IMR-90 (cell line): ENCODE measurements at regions of chr4 and their contacts with region 1.

Region 1: DNA sequence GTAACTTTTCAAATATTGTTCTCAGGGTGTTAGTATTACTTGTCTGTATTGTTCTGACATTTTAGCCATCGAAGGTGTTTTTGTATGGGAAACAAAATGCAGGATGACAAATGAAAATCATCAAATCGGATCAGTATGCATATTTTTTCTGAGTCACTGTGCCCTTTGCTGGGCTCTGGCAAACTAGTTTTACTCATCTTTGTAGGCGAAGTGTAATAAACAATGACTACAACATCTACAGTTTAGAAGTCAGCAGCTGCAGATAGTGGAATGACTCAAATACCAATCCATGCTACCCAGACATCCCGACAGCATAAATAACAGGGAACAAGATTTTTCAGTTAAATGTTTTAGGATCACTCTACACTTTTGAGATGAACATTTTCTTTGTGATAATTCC is 557.3 kb upstream of the TENM3 start:
- DNase-seq: peak; percentile 97
- ATAC-seq: peak; percentile 85
- H3K4me3 ChIP-seq: peak overlapping the region; percentile 8; the same call in 1 of the 2 replicates
- H3K27ac ChIP-seq: no peak overlapping the region
- H3K4me1 ChIP-seq: peaks cover 11% of the 10 kb centered on the region
- H3K27me3 ChIP-seq: no peaks in the 10 kb centered on the region
- CTCF ChIP-seq: no peak
- POLR2A ChIP-seq: peak; percentile 33; the same call in 1 of the 2 replicates
- RAD21 ChIP-seq: no peak

Region 2: DNA sequence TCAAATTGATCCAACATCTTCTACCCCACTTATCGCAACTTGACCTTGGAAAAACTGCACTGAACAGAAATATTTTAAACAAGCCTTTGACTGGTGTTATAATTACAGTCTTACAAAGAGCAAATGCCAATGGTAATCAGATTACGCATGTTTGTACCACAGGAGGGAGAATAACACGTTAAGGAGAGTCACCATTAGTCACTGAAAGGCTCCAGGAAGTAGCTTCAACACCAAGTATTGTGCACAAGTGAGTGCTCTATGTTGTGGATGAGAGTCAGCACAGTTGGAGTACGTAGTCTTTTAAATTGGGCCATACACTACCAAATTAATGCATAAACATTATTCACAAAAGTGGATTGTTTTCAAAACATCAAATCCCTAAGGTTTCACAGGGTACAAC is 524.2 kb before region 1 on chr4:
- CTCF ChIA-PET with region 1: no interaction called
- POLR2A ChIA-PET with region 1: no interaction called
- dilution Hi-C with region 1: no loop called
- in situ Hi-C with region 1: no loop called
- intact Hi-C with region 1: no loop called
- DNase-seq: no peak
- ATAC-seq: no peak
- H3K4me3 ChIP-seq: no peak overlapping the region
- H3K27ac ChIP-seq: no peak overlapping the region
- H3K4me1 ChIP-seq: no peaks in the 10 kb centered on the region
- H3K27me3 ChIP-seq: no peaks in the 10 kb centered on the region
- CTCF ChIP-seq: no peak
- POLR2A ChIP-seq: no peak
- RAD21 ChIP-seq: no peak

Region 3: DNA sequence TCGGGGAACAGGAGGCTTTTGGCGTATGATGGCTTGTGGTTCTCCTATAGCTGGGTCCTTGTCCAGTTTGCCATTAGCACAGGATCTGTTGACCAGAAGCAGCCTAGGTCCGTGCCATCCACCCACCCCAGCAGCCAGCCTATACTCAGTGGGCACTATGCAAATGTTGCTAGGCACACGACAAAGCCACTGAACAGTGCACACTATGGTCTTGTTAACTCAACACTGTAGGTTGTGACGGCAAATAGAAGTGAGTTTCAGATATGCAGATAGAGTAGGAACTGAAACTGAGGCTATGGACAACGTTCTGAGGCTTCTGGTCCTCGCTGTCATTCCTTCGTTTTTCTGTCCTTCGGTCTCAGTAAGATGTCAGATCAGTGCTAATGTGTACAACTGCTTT is 16.0 kb after region 1 on chr4:
- CTCF ChIA-PET with region 1: no interaction called
- POLR2A ChIA-PET with region 1: interaction called, 20 read pairs
- dilution Hi-C with region 1: no loop called
- in situ Hi-C with region 1: no loop called
- intact Hi-C with region 1: no loop called
- DNase-seq: no peak
- ATAC-seq: no peak
- H3K4me3 ChIP-seq: no peak overlapping the region
- H3K27ac ChIP-seq: no peak overlapping the region
- H3K4me1 ChIP-seq: no peaks in the 10 kb centered on the region
- H3K27me3 ChIP-seq: no peaks in the 10 kb centered on the region
- CTCF ChIP-seq: no peak
- POLR2A ChIP-seq: no peak
- RAD21 ChIP-seq: no peak

Region 4: DNA sequence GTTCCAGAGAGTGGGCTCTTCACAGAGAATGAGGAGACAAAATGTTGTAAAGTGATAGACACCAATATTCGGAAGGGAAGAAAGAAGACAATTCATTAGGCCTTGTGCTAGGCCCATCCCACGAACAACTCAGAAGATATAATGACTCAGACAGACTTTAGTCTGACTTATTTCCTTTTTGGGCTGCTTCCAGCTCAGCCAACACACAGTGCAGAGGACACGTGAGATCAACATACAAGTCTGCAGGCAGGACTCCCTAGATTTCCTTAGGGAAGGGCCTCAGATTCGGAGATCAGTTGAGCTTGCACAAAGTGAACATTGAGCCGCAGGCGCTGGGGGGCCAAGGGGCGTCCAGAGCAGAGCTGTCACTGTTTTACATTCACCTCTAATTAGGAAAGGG is 266.6 kb after region 1 on chr4:
- CTCF ChIA-PET with region 1: no interaction called
- POLR2A ChIA-PET with region 1: no interaction called
- dilution Hi-C with region 1: no loop called
- in situ Hi-C with region 1: no loop called
- intact Hi-C with region 1: loop called (anchors 5 kb)
- DNase-seq: peak; percentile 96
- ATAC-seq: peak; percentile 85
- H3K4me3 ChIP-seq: no peak overlapping the region
- H3K27ac ChIP-seq: peak overlapping the region; percentile 39
- H3K4me1 ChIP-seq: peaks cover 6% of the 10 kb centered on the region
- H3K27me3 ChIP-seq: no peaks in the 10 kb centered on the region
- CTCF ChIP-seq: no peak
- POLR2A ChIP-seq: no peak
- RAD21 ChIP-seq: no peak